MCF 10A (cell line): ENCODE measurements at regions of chr4 and their contacts with region 1.

Region 1: GRCh38 chr4:120156120-120156718 is 89.6 kb upstream of the MAD2L1 start:
- DNase-seq: peak; percentile 75
- H3K4me3 Mint-ChIP-seq: no peak overlapping the region
- H3K27ac Mint-ChIP-seq: no peak overlapping the region
- H3K4me1 Mint-ChIP-seq: no peaks in the 10 kb centered on the region
- H3K27me3 Mint-ChIP-seq: no peaks in the 10 kb centered on the region
- CTCF ChIP-seq: peak; percentile 60

Region 2: DNA sequence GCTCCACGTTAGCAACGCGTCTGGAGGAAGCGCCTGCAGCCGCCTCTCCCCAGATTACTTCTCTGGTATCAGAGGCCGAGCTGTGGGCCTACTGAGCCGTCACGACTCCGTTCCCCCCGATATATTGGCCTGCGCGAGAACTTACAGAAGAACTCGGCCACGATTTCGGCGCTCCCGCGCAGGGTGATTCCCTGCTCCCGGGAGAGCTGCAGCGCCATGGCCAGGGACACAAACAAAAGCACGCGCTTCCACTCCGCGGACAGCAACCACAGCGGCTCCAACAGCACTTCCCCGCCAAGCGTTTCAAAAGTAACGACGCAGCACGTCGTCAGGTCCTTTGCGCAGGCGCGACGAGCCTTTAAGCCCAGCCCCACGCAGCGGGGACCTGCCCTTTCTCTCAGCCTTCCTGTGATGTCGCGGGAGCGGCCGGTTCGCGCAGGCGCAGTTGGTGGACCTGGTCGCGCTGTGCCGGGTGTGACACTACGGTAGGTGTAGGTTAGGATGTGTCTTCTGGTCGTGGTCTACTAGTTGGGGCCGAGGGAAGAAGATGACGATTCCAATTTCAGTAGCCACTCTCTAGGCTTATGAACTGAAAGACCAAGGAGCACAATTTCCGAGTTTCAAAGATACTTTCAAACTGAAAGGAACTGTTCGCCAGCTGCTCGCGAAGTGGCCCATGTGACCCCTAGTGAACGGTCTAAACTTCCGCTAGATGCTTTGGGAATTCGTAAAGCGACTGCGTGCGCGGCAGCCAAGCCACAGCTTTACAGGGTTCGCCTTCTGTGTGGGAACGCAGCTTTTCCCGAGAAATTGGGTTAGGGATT is 89.5 kb before region 1 on chr4 and contains the start of gene MAD2L1:
- CTCF ChIA-PET with region 1: interaction called, 3 read pairs
- POLR2A ChIA-PET with region 1: no interaction called
- intact Hi-C with region 1: loop called (anchors 2 kb)
- DNase-seq: peak; percentile 99
- H3K4me3 Mint-ChIP-seq: peak within 1 kb of the TSS; percentile 94
- H3K27ac Mint-ChIP-seq: peak within 1 kb of the TSS; percentile 96
- H3K4me1 Mint-ChIP-seq: peaks cover 53% of the 10 kb centered on the region
- H3K27me3 Mint-ChIP-seq: no peaks in the 10 kb centered on the region
- CTCF ChIP-seq: no peak
- total RNA-seq, gene MAD2L1: 16.2 and 26.8 TPM in 2 replicates

Region 3: GRCh38 chr4:120132935-120133334 is 23.3 kb before region 1 on chr4:
- CTCF ChIA-PET with region 1: no interaction called
- POLR2A ChIA-PET with region 1: no interaction called
- intact Hi-C with region 1: no loop called
- DNase-seq: peak; percentile 3
- H3K4me3 Mint-ChIP-seq: no peak overlapping the region
- H3K27ac Mint-ChIP-seq: no peak overlapping the region
- H3K4me1 Mint-ChIP-seq: no peaks in the 10 kb centered on the region
- H3K27me3 Mint-ChIP-seq: no peaks in the 10 kb centered on the region
- CTCF ChIP-seq: no peak

Region 4: GRCh38 chr4:120286813-120287212 is 130.6 kb after region 1 on chr4:
- CTCF ChIA-PET with region 1: no interaction called
- POLR2A ChIA-PET with region 1: no interaction called
- intact Hi-C with region 1: no loop called
- DNase-seq: no peak
- H3K4me3 Mint-ChIP-seq: no peak overlapping the region
- H3K27ac Mint-ChIP-seq: no peak overlapping the region
- H3K4me1 Mint-ChIP-seq: no peaks in the 10 kb centered on the region
- H3K27me3 Mint-ChIP-seq: no peaks in the 10 kb centered on the region
- CTCF ChIP-seq: no peak

Region 5: DNA sequence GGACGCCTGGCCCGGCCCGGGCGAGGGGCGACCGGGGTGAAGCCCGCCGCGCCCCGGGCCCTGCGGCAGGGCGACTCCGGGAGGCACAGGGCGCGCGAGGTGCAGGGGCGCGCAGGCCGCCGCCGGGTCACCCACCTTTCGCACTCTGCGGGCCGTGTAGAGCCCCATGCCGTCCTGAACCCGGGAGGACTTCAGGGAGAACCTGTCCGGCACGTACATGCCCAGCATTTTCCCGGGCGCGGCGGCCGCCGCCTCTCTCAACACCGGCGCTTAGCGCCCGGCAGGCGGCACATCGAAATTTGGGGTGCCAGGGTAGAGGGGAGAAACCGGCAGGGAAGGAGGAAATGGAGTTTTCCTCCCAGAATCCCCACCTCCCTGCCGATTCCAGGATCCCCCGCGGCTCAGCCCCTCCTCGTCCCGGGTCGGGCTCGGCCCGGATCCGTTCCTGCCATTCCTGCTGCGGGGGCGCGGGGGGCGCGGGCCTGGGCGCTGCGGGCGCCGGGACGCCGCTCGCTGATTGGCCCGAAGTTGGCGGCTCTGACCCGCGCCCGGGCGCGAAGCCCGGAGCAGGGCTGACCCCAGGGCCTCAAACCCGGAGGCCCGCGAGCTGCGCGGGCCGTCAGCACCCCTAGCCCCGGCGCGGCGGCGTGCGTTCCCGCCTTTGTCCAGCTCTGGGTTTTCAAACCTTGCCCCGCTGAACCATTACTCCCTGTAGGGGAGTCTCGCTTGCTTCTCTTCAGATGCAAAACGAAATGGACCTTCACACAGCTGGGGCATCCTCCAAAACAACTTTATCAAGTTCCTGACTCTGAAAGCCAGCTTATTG is 766.4 kb after region 1 on chr4 and contains the start of gene PRDM5:
- CTCF ChIA-PET with region 1: interaction called, 4 read pairs
- POLR2A ChIA-PET with region 1: no interaction called
- intact Hi-C with region 1: loop called (anchors 2 kb)
- DNase-seq: peak; percentile 40
- H3K4me3 Mint-ChIP-seq: peak within 1 kb of the TSS; percentile 99
- H3K27ac Mint-ChIP-seq: peak within 1 kb of the TSS; percentile 93
- H3K4me1 Mint-ChIP-seq: peaks cover 8% of the 10 kb centered on the region
- H3K27me3 Mint-ChIP-seq: no peaks in the 10 kb centered on the region
- CTCF ChIP-seq: no peak
- total RNA-seq, gene PRDM5: 6.4 and 7.3 TPM in 2 replicates

Region 6: DNA sequence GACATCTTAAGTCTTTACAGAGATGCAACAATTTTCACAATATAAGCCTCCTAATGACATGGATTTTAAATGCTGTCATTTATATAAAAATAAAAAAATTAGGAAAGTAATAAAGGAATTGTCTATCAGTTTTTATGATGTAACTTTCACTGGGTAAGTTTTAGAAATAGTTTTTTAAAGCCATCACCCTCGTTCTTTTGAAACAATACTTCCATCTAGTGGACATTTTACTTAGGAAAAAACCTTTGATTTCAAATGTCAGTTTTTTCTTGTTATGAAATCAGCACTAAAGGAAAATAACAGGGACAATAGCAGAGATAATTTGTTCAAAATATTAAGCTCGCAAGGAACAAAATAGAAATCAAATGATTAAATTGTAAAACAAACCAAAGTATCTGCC is 940.4 kb after region 1 on chr4:
- CTCF ChIA-PET with region 1: interaction called, 5 read pairs
- POLR2A ChIA-PET with region 1: no interaction called
- intact Hi-C with region 1: loop called (anchors 1 kb)
- DNase-seq: peak; percentile 36
- H3K4me3 Mint-ChIP-seq: no peak overlapping the region
- H3K27ac Mint-ChIP-seq: no peak overlapping the region
- H3K4me1 Mint-ChIP-seq: no peaks in the 10 kb centered on the region
- H3K27me3 Mint-ChIP-seq: no peaks in the 10 kb centered on the region
- CTCF ChIP-seq: peak; percentile 34

Region 7: GRCh38 chr4:121421594-121421993 is 1265.4 kb after region 1 on chr4:
- CTCF ChIA-PET with region 1: no interaction called
- POLR2A ChIA-PET with region 1: no interaction called
- intact Hi-C with region 1: loop called (anchors 2 kb)
- DNase-seq: peak; percentile 59
- H3K4me3 Mint-ChIP-seq: no peak overlapping the region
- H3K27ac Mint-ChIP-seq: peak overlapping the region; percentile 8
- H3K4me1 Mint-ChIP-seq: peaks cover 7% of the 10 kb centered on the region
- H3K27me3 Mint-ChIP-seq: no peaks in the 10 kb centered on the region
- CTCF ChIP-seq: peak; percentile 67